ENCODE measurements at regions of chr5 and their contacts with region 1.

Region 1: DNA sequence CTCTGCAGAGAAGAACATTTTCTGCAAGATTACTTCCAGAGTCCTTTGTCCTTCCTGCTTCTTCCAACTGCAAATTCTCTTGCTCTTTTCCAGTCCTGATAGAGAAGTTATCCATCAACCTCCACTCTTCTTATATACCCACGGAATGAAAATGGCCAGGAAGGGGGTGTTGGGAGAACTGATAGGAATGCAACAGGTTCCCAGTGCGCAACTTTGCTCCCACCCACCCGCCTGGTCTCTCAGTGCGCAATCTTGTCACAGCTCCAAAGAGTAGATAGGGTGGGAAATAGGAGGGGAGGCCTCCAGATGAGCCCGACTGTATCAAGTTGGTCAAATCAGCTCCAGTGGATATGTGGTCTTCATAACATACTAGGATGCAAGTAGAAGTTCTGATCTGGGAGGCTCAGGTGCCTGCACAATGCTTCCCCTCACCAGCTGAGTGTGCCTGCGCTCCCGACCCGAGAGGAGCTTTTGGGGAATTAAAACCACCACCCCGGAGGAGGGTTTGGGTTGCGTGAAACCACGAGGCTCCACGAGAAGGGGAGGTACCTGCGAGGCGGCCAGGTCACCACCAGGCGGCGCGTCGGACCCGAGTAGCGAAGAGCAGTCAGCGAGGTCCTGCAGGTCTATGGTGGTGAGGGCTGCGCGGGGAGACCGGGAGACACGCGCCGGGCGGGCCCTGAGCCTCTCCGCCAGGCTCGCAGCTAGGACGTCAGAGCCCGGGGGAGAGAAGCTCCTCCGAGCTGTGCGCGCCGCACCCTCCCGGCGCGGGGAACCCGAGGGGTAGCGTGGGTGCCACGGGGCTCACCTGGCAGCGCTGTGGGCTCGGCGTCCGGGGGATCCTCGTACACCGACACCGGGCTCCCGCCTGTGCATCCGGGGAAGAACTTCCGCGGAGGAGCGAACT is 835 bp downstream of the MCIDAS start:
- DNase-seq: no peak
- ATAC-seq: peak; percentile 58

Region 2: DNA sequence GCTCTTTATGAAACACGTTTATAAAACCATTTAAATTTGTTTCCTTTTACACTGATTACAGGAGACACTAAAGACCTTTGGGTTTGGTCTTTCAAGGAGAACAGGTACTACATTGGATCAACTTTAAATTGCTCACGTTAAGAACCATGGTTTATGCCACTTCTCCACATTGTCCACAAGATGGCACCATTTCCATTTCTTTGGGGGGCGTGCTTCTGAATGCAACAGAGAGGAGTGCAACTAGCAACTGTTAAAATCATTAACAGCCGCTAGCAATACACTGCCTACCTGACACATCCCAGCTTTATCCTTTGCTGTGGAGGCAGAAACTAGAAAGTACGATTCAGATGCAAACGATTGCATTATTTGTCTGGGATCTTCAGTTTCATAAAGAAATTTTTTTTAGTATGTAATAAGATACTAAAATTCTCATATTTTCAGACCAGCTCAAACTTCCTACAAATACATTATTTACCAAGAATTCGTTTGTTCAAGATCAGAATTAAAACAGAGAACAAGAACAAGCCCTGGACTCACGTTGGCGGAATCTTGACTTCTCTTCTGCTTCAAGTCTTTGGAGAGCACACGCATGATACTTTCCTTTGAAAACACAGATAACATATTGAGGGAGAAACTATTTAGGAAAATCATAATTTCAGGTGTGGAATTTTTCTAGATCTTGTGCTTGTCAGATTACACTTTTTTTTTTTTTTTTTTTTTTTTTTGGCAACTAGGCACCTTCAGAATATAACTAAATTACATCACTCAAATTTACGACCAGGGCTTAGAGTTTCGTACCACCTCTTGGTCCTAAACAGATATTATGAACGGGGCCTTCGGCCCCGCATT is 54.0 kb before region 1 on chr5:
- intact Hi-C with region 1: loop called (anchors 10 kb)
- DNase-seq: no peak
- ATAC-seq: peak; percentile 88